IMR-90 (cell line): ENCODE measurements at regions of chr5 and their contacts with region 1.

Region 1: DNA sequence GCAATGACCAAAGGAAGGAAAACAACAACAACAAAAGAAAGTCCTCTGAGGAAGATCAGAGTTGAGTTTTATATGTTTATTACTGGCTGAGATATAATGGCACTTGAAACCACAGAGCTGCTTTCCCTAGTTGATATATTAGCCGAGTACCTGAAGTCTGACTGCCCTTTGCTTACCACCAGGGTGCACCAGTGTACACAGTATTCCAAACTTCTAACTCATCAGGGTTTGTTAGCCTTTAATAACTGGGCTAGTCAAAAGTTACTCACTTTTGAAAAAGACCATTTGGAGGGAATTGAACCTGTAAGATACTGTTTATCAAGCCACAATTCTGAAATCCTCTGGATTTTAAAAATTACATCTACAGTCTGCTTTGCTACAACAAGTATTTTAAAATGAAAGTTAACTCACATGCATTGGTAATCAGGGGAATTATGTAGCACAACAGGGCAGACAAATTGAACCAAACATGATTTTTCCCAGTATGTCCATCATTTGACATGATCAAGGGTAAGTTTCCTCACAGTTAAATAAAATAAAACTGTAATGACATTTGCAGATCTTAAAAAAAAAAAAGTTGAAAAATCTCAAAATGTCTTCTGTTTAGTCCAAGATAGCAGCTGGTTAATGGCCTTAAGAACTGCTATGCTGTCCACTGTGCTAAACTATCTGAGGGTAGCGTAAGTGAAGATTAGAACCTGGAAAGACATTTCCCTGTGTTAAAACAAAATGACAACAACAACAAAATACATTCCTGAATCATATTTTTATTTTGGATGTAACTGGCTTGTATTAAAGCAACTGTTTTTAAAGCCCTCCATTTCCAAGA is 57.3 kb upstream of the C6 start:
- DNase-seq: peak; percentile 76
- ATAC-seq: peak; percentile 89
- H3K4me3 ChIP-seq: no peak overlapping the region
- H3K27ac ChIP-seq: no peak overlapping the region
- H3K4me1 ChIP-seq: peaks cover 6% of the 10 kb centered on the region
- H3K27me3 ChIP-seq: no peaks in the 10 kb centered on the region
- CTCF ChIP-seq: peak; percentile 80
- POLR2A ChIP-seq: no peak
- RAD21 ChIP-seq: peak; percentile 77

Region 2: GRCh38 chr5:41346609-41347008 is 76.0 kb after region 1 on chr5:
- CTCF ChIA-PET with region 1: interaction called, 6 read pairs
- POLR2A ChIA-PET with region 1: no interaction called
- dilution Hi-C with region 1: no loop called
- in situ Hi-C with region 1: no loop called
- intact Hi-C with region 1: loop called (anchors 2 kb)
- DNase-seq: peak; percentile 49
- ATAC-seq: peak; percentile 59
- H3K4me3 ChIP-seq: no peak overlapping the region
- H3K27ac ChIP-seq: no peak overlapping the region
- H3K4me1 ChIP-seq: no peaks in the 10 kb centered on the region
- H3K27me3 ChIP-seq: no peaks in the 10 kb centered on the region
- CTCF ChIP-seq: peak; percentile 43
- POLR2A ChIP-seq: no peak
- RAD21 ChIP-seq: peak; percentile 46

Region 3: GRCh38 chr5:41524174-41524573 is 253.5 kb after region 1 on chr5:
- CTCF ChIA-PET with region 1: no interaction called
- POLR2A ChIA-PET with region 1: no interaction called
- dilution Hi-C with region 1: no loop called
- in situ Hi-C with region 1: no loop called
- intact Hi-C with region 1: loop called (anchors 5 kb)
- DNase-seq: no peak
- ATAC-seq: no peak
- H3K4me3 ChIP-seq: no peak overlapping the region
- H3K27ac ChIP-seq: no peak overlapping the region
- H3K4me1 ChIP-seq: peaks cover 3% of the 10 kb centered on the region; the same call in 1 of the 2 replicates
- H3K27me3 ChIP-seq: no peaks in the 10 kb centered on the region
- CTCF ChIP-seq: no peak
- POLR2A ChIP-seq: no peak
- RAD21 ChIP-seq: peak; percentile 27; the same call in 1 of the 2 replicates

Region 4: DNA sequence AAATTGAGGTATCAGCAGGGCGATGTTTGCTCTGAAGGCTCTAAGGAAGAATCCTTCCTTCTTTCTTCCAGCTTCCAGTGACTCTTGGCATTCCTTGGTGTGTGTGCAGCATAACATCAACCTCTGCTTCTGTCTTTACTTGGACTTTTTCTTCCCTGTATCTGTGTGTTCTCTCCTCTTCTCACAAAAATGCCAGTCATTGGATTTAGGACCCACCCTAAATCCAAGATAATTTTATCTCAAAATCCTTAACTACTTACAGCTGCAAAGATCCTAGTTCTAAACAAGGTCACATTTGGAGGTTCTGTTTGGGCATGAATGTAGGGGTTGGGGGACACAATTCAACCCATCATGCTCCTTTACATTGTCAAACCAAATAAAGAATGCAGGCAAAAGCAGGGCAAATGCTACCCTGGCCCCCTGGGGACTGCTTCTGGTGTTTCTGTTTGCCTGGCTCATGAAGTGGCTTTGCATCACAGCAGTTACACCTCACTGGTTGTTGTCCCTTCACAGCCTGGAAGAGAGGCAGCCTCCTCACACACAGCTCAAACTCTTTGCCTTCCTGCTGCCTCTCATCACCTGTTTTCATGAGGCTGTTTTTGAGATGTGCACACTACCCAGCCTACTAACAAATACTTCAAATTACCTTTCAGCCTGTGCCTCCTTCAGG is 304.6 kb after region 1 on chr5:
- CTCF ChIA-PET with region 1: no interaction called
- POLR2A ChIA-PET with region 1: no interaction called
- dilution Hi-C with region 1: no loop called
- in situ Hi-C with region 1: no loop called
- intact Hi-C with region 1: no loop called
- DNase-seq: no peak
- ATAC-seq: no peak
- H3K4me3 ChIP-seq: no peak overlapping the region
- H3K27ac ChIP-seq: no peak overlapping the region
- H3K4me1 ChIP-seq: no peaks in the 10 kb centered on the region
- H3K27me3 ChIP-seq: no peaks in the 10 kb centered on the region
- CTCF ChIP-seq: no peak
- POLR2A ChIP-seq: no peak
- RAD21 ChIP-seq: no peak

Region 5: DNA sequence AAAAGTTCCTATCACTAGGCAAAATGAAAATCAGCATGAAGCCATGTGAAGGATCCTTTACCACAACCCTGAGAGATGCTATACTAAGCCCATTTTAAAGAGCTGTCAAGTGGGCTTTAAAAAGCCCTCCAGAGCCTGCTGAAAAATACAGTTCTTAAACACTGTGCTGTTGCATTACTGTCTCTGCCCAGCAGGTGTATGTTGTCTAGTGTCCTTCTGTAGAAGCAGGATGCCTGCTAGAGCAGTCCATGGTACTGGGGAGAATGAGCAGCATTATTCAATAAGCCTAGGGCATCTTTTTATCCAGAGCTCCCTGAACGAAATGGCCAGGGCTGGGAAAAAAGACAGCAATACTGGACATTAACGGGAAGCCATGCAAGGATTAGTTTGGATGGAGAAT is 366.0 kb after region 1 on chr5:
- CTCF ChIA-PET with region 1: interaction called, 3 read pairs
- POLR2A ChIA-PET with region 1: no interaction called
- dilution Hi-C with region 1: no loop called
- in situ Hi-C with region 1: no loop called
- intact Hi-C with region 1: loop called (anchors 5 kb)
- DNase-seq: peak; percentile 28
- ATAC-seq: peak; percentile 66; the same call in 1 of the 2 replicates
- H3K4me3 ChIP-seq: no peak overlapping the region
- H3K27ac ChIP-seq: no peak overlapping the region
- H3K4me1 ChIP-seq: no peaks in the 10 kb centered on the region
- H3K27me3 ChIP-seq: no peaks in the 10 kb centered on the region
- CTCF ChIP-seq: peak; percentile 28
- POLR2A ChIP-seq: no peak
- RAD21 ChIP-seq: no peak